ENCODE measurements at regions of chr10 and their contacts with region 1.

Region 1: DNA sequence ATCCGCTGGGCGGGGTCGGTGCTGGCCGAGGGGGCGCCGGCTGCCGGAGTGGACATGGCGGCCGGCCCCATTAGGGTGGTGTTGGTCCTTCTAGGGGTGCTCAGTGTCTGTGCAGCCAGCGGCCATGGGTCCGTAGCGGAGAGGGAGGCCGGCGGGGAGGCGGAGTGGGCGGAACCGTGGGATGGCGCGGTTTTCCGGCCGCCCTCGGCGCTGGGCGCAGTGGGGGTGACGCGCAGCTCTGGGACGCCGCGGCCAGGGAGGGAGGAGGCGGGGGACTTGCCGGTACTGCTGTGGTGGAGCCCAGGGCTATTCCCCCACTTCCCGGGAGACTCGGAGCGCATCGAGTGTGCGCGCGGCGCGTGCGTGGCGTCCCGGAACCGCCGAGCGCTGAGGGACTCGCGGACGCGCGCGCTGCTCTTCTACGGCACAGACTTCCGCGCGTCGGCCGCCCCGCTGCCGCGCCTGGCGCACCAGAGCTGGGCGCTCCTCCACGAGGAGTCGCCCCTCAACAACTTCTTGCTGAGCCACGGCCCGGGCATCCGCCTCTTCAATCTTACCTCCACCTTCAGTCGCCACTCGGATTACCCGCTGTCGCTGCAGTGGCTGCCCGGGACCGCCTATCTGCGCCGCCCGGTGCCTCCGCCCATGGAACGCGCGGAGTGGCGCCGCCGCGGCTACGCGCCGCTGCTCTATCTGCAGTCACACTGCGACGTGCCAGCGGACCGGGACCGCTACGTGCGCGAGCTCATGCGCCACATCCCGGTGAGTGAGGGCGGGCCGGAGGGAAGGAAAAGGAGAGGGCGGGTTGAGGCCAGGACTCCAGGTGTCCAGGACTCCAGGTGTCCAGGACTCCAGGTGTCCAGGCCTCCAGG is 9.3 kb upstream of the CHCHD1 start:
- DNase-seq: peak; percentile 90 to 94 (median 92)
- ATAC-seq: peak; percentile 86
- H3K4me3 ChIP-seq: peak overlapping the region; percentile 74
- H3K27ac ChIP-seq: peak overlapping the region; percentile 91
- H3K4me1 ChIP-seq: peaks cover 21 to 29% of the 10 kb centered on the region in 2 experiments; a peak in 4 of 5 replicates
- H3K27me3 ChIP-seq: no peaks in the 10 kb centered on the region
- CTCF ChIP-seq: peak in 2 of 3 experiments; percentile 22 to 24; a peak in 3 of 6 replicates
- EP300 ChIP-seq: no peak
- POLR2A ChIP-seq: peak; percentile 97
- RAD21 ChIP-seq: peak; percentile 9 to 20; a peak in 2 of 4 replicates

Region 2: DNA sequence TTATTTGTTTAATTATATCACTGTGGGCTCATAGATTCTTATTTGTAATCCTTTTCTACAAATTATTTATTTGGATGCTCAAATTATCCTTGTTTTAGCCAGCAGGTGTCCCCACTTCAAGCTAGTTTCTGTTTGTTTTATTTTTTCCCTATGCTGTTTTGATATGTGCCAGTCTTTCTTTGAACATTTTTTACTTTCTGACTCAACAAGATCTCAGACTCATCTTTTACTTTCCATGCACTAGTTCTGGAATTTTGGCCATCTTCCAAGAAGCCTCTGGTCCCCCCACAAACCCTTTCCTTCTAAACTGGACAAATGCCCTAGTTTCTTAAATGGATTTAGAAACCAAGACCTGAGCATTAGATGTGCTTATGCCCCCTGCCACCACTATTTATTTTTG is 508.6 kb before region 1 on chr10:
- CTCF ChIA-PET with region 1: no interaction called
- POLR2A ChIA-PET with region 1: no interaction called
- in situ Hi-C with region 1: no loop called
- intact Hi-C with region 1: no loop called
- DNase-seq: peak in 3 of 4 experiments; percentile 17 to 39 (median 21)
- ATAC-seq: peak; percentile 55; the same call in 2 of the 3 replicates
- H3K4me3 ChIP-seq: no peak overlapping the region
- H3K27ac ChIP-seq: no peak overlapping the region
- H3K4me1 ChIP-seq: peaks cover 0 to 7% of the 10 kb centered on the region in 2 experiments; a peak in 2 of 5 replicates
- H3K27me3 ChIP-seq: no peaks in the 10 kb centered on the region
- CTCF ChIP-seq: peak; percentile 49 to 75 (median 64); a peak in 4 of 6 replicates
- EP300 ChIP-seq: no peak
- POLR2A ChIP-seq: no peak
- RAD21 ChIP-seq: peak; percentile 55 to 72

Region 3: GRCh38 chr10:73743905-73744663 is 28.4 kb before region 1 on chr10 and contains the start of gene SEC24C:
- CTCF ChIA-PET with region 1: no interaction called
- POLR2A ChIA-PET with region 1: interaction called, 39 read pairs
- in situ Hi-C with region 1: no loop called
- intact Hi-C with region 1: no loop called
- DNase-seq: peak; percentile 98 to 99 (median 98)
- ATAC-seq: peak; percentile 91
- H3K4me3 ChIP-seq: peak within 1 kb of the TSS; percentile 72
- H3K27ac ChIP-seq: peak within 1 kb of the TSS; percentile 99
- H3K4me1 ChIP-seq: peaks cover 5 to 24% of the 10 kb centered on the region in 2 experiments; a peak in 3 of 5 replicates
- H3K27me3 ChIP-seq: no peaks in the 10 kb centered on the region
- CTCF ChIP-seq: no peak
- EP300 ChIP-seq: no peak; the same call in 1 of the 2 replicates
- POLR2A ChIP-seq: peak; percentile 98
- RAD21 ChIP-seq: 0 out of 4 replicates have a peak, but pooled peaks of 1 of the 2 experiments have one; percentile 11
- polyA plus RNA-seq, gene SEC24C: 19.0 to 88.4 TPM

Region 4: GRCh38 chr10:73785221-73785720 is 12.8 kb after region 1 on chr10 and contains the start of gene ZSWIM8:
- CTCF ChIA-PET with region 1: interaction called, 3 read pairs
- POLR2A ChIA-PET with region 1: interaction called, 113 read pairs
- in situ Hi-C with region 1: no loop called
- intact Hi-C with region 1: no loop called
- DNase-seq: peak; percentile 93 to 96 (median 94)
- ATAC-seq: peak; percentile 87
- H3K4me3 ChIP-seq: peak within 1 kb of the TSS; percentile 89
- H3K27ac ChIP-seq: peak within 1 kb of the TSS; percentile 76
- H3K4me1 ChIP-seq: peaks cover 16 to 32% of the 10 kb centered on the region in 2 experiments
- H3K27me3 ChIP-seq: no peaks in the 10 kb centered on the region
- CTCF ChIP-seq: peak in 1 of 3 experiments; percentile 24; a peak in 1 of 6 replicates
- EP300 ChIP-seq: no peak
- POLR2A ChIP-seq: peak; percentile 85
- RAD21 ChIP-seq: no peak; a peak in 2 of 4 replicates
- polyA plus RNA-seq, gene ZSWIM8: 5.6 to 6.2 TPM

Region 5: GRCh38 chr10:73848821-73849489 is 76.4 kb after region 1 on chr10:
- CTCF ChIA-PET with region 1: no interaction called
- POLR2A ChIA-PET with region 1: interaction called, 3 read pairs
- in situ Hi-C with region 1: no loop called
- intact Hi-C with region 1: loop called (anchors 2 kb)
- DNase-seq: peak; percentile 90 to 95 (median 92)
- ATAC-seq: peak; percentile 98
- H3K4me3 ChIP-seq: no peak overlapping the region
- H3K27ac ChIP-seq: no peak overlapping the region
- H3K4me1 ChIP-seq: peaks cover 0 to 11% of the 10 kb centered on the region in 2 experiments; a peak in 2 of 5 replicates
- H3K27me3 ChIP-seq: no peaks in the 10 kb centered on the region
- CTCF ChIP-seq: peak; percentile 97 to 99 (median 99)
- EP300 ChIP-seq: no peak
- POLR2A ChIP-seq: no peak
- RAD21 ChIP-seq: peak; percentile 99

Region 6: GRCh38 chr10:73950155-73950948 is 177.8 kb after region 1 on chr10:
- CTCF ChIA-PET with region 1: no interaction called
- POLR2A ChIA-PET with region 1: no interaction called
- in situ Hi-C with region 1: no loop called
- intact Hi-C with region 1: no loop called
- DNase-seq: no peak
- ATAC-seq: no peak
- H3K4me3 ChIP-seq: no peak overlapping the region
- H3K27ac ChIP-seq: no peak overlapping the region
- H3K4me1 ChIP-seq: no peaks in the 10 kb centered on the region; a peak in 1 of 5 replicates
- H3K27me3 ChIP-seq: no peaks in the 10 kb centered on the region
- CTCF ChIP-seq: no peak
- EP300 ChIP-seq: no peak
- POLR2A ChIP-seq: no peak
- RAD21 ChIP-seq: no peak

Region 7: DNA sequence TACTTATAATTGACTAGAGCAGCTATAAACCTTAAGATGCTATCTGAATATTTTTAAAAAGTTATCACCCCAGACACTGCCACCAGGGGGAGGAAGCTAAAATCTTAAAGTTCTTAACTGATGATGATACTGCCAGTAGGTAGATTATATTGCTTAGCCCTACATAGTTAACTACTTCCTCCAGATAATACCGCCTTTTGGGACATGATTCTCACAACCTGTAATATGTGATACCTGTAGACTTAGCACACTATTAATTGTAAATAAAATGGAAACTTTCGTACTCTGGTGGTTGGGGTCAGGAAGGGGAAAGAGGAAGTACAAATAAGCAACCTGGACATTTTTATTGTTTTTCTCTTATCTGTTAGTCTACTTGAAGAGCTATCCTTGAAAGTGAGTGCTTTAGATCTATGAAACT is 647.5 kb after region 1 on chr10:
- CTCF ChIA-PET with region 1: no interaction called
- POLR2A ChIA-PET with region 1: no interaction called
- in situ Hi-C with region 1: no loop called
- intact Hi-C with region 1: no loop called
- DNase-seq: peak; percentile 19 to 53 (median 44)
- ATAC-seq: peak; percentile 60
- H3K4me3 ChIP-seq: no peak overlapping the region
- H3K27ac ChIP-seq: no peak overlapping the region
- H3K4me1 ChIP-seq: peaks cover 4 to 15% of the 10 kb centered on the region in 2 experiments; a peak in 3 of 5 replicates
- H3K27me3 ChIP-seq: no peaks in the 10 kb centered on the region
- CTCF ChIP-seq: peak in 2 of 3 experiments; percentile 22 to 51; a peak in 2 of 6 replicates
- EP300 ChIP-seq: no peak
- POLR2A ChIP-seq: no peak
- RAD21 ChIP-seq: peak in 1 of 2 experiments; percentile 28; a peak in 1 of 4 replicates

Measured in K562 (cell line).